Natural killer cell (primary cell): ENCODE measurements at regions of chr9 and their contacts with region 1.

Region 1: DNA sequence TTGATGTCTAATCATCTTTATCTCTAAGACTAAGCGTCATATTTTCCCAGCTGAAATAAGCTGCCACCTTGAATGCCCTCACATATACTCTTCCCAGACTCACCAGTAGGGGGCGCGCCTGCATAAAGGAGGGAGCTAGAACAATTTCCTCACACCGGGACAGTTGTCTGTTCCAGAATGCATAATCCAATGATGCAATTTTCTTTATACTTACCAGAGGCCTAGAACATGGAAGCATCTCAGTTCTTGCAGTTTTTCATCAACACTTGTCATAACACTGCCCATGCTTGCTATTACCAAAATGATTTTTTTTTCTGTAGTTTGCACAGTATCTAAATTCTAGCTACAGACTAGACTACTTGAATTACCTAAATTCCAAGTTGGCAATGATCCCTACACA is 203.9 kb downstream of the FRMD3 start:
- DNase-seq: peak; percentile 58 to 66
- ATAC-seq: peak; percentile 65 to 78 (median 69)
- H3K4me3 ChIP-seq: no peak overlapping the region
- H3K4me3 Mint-ChIP-seq: no peak overlapping the region
- H3K27ac ChIP-seq: no peak overlapping the region
- H3K27ac Mint-ChIP-seq: no peak overlapping the region
- H3K4me1 ChIP-seq: no peaks in the 10 kb centered on the region
- H3K4me1 Mint-ChIP-seq: peaks cover 0 to 6% of the 10 kb centered on the region in 2 donors
- H3K27me3 ChIP-seq: no peaks in the 10 kb centered on the region
- H3K27me3 Mint-ChIP-seq: no peaks in the 10 kb centered on the region
- CTCF ChIP-seq: peak; percentile 75

Region 2: GRCh38 chr9:83544002-83544698 is 209.8 kb after region 1 on chr9:
- intact Hi-C with region 1: loop called (anchors 1 kb)
- DNase-seq: peak in 1 of 2 donors; percentile 15
- ATAC-seq: peak; percentile 49 to 79 (median 72)
- H3K4me3 ChIP-seq: no peak overlapping the region
- H3K4me3 Mint-ChIP-seq: no peak overlapping the region
- H3K27ac ChIP-seq: no peak overlapping the region
- H3K27ac Mint-ChIP-seq: no peak overlapping the region
- H3K4me1 ChIP-seq: no peaks in the 10 kb centered on the region
- H3K4me1 Mint-ChIP-seq: no peaks in the 10 kb centered on the region
- H3K27me3 ChIP-seq: peaks cover 2% of the 10 kb centered on the region
- H3K27me3 Mint-ChIP-seq: peaks cover 11 to 23% of the 10 kb centered on the region in 2 donors
- CTCF ChIP-seq: peak; percentile 60

Region 3: GRCh38 chr9:83596896-83597504 is 262.7 kb after region 1 on chr9:
- intact Hi-C with region 1: loop called (anchors 1 kb)
- DNase-seq: peak; percentile 23 to 61
- ATAC-seq: peak in 1 of 3 donors; percentile 55
- H3K4me3 ChIP-seq: no peak overlapping the region
- H3K4me3 Mint-ChIP-seq: no peak overlapping the region
- H3K27ac ChIP-seq: no peak overlapping the region
- H3K27ac Mint-ChIP-seq: no peak overlapping the region
- H3K4me1 ChIP-seq: no peaks in the 10 kb centered on the region
- H3K4me1 Mint-ChIP-seq: no peaks in the 10 kb centered on the region
- H3K27me3 ChIP-seq: no peaks in the 10 kb centered on the region
- H3K27me3 Mint-ChIP-seq: peaks cover 0 to under 1% of the 10 kb centered on the region in 2 donors
- CTCF ChIP-seq: peak; percentile 85

Region 4: GRCh38 chr9:83649080-83649479 is 314.8 kb after region 1 on chr9:
- intact Hi-C with region 1: loop called (anchors 1 kb)
- DNase-seq: peak; percentile 67 to 86
- ATAC-seq: peak; percentile 92 to 98 (median 97)
- H3K4me3 ChIP-seq: no peak overlapping the region
- H3K4me3 Mint-ChIP-seq: no peak overlapping the region
- H3K27ac ChIP-seq: no peak overlapping the region
- H3K27ac Mint-ChIP-seq: no peak overlapping the region
- H3K4me1 ChIP-seq: no peaks in the 10 kb centered on the region
- H3K4me1 Mint-ChIP-seq: peaks cover 6 to 9% of the 10 kb centered on the region in 2 donors
- H3K27me3 ChIP-seq: no peaks in the 10 kb centered on the region
- H3K27me3 Mint-ChIP-seq: no peaks in the 10 kb centered on the region
- CTCF ChIP-seq: peak; percentile 80